Cardiac septum (tissue), 1 donor: ENCODE measurements at regions of chr2 and their contacts with region 1.

Region 1: DNA sequence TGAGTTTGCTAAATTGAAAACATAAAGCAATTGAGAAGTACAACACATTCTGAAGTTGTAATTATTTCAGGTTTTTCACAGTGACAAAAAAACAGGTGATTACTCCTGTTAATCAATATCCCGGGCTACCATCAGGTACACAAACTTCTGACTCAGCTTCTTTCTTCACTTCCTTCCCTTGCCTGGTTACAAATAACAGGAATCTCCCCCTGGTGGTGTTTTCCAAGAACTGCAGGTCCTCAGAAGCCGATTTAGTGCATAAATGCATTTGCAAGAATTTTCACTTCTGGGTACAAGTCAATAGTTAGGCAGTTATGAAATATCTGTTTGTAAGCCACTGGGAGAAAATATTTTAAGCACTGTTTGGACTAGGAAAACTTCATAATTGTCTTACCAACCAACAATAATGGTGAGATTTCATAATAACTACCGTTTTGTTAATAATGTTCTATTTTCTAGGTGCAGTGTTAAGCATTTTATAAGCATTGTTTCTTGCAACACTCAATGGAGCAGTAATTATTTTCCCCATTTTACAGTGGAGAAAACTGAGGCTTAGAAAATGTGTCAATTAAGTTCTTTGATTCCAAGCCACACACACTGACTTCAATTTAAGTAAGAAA is 12.4 kb upstream of the GMCL1 start:
- DNase-seq: no peak

Region 2: GRCh38 chr2:69535817-69536241 is 281.2 kb before region 1 on chr2:
- intact Hi-C with region 1: loop called (anchors 10 kb)
- DNase-seq: no peak